ENCODE measurements at regions of chr14 and their contacts with region 1.

Region 1: GRCh38 chr14:81211844-81212243 is 8.9 kb downstream of the GTF2A1 start:
- DNase-seq: no peak
- ATAC-seq: peak; percentile 80
- H3K4me3 Mint-ChIP-seq: no peak overlapping the region
- H3K27ac Mint-ChIP-seq: no peak overlapping the region
- H3K4me1 Mint-ChIP-seq: peaks cover 53% of the 10 kb centered on the region
- H3K27me3 Mint-ChIP-seq: no peaks in the 10 kb centered on the region
- CTCF ChIP-seq: no peak

Region 2: DNA sequence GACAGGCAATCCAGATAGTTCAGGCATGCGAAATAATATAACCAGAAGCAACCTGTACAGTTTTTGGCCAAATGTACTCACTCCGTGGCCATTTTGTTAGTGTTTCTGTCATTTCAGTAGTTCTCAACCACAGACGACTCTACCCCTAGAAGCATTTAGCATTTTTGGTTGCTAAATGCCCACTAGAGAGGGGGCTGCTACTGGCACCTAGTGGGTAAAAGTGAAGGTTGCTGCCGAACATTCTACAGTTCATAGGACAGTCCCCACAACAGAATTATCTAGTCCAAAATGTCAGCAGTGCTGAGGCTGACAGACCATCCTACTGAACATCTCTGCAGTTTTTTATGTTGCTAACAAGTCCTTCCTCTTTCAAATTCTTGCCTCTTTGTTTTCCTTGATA is 149.0 kb before region 1 on chr14:
- CTCF ChIA-PET with region 1: no interaction called
- POLR2A ChIA-PET with region 1: no interaction called
- intact Hi-C with region 1: loop called (anchors 2 kb)
- DNase-seq: no peak
- ATAC-seq: peak; percentile 69
- H3K4me3 Mint-ChIP-seq: no peak overlapping the region
- H3K27ac Mint-ChIP-seq: no peak overlapping the region
- H3K4me1 Mint-ChIP-seq: no peaks in the 10 kb centered on the region
- H3K27me3 Mint-ChIP-seq: peaks cover 6% of the 10 kb centered on the region
- CTCF ChIP-seq: no peak